Ovary (tissue), 10 donors: ENCODE measurements at regions of chr13 and their contacts with region 1.

Region 1: GRCh38 chr13:104657196-104657595 is 1591.0 kb upstream of the SLC10A2 start:
- DNase-seq: no peak
- H3K4me3 ChIP-seq: no peak overlapping the region
- H3K27ac ChIP-seq: no peak overlapping the region
- H3K4me1 ChIP-seq: no peaks in the 10 kb centered on the region
- H3K27me3 ChIP-seq: no peaks in the 10 kb centered on the region
- CTCF ChIP-seq: no peak
- EP300 ChIP-seq: no peak
- POLR2A ChIP-seq: no peak

Region 2: GRCh38 chr13:102757006-102757405 is 1900.2 kb before region 1 on chr13:
- intact Hi-C with region 1: loop called in 1 of 4 experiments (anchors 5 kb)
- DNase-seq: no peak
- H3K4me3 ChIP-seq: no peak overlapping the region
- H3K27ac ChIP-seq: no peak overlapping the region
- H3K4me1 ChIP-seq: no peaks in the 10 kb centered on the region
- H3K27me3 ChIP-seq: no peaks in the 10 kb centered on the region
- CTCF ChIP-seq: no peak
- EP300 ChIP-seq: no peak
- POLR2A ChIP-seq: no peak